ENCODE measurements at regions of chr4 and their contacts with region 1.

Region 1: GRCh38 chr4:102826890-102827673 is at the start of gene UBE2D3:
- DNase-seq: peak; percentile 92 to 98 (median 94)
- ATAC-seq: peak; percentile 39
- H3K4me3 ChIP-seq: peak within 1 kb of the TSS; percentile 89
- H3K4me3 Mint-ChIP-seq: no peak within 1 kb of the TSS
- H3K27ac ChIP-seq: peak within 1 kb of the TSS; percentile 99 to 100
- H3K27ac Mint-ChIP-seq: no peak within 1 kb of the TSS
- H3K4me1 ChIP-seq: peaks cover 14% of the 10 kb centered on the region
- H3K4me1 Mint-ChIP-seq: peaks cover 31% of the 10 kb centered on the region
- H3K27me3 ChIP-seq: no peaks in the 10 kb centered on the region
- H3K27me3 Mint-ChIP-seq: no peaks in the 10 kb centered on the region
- CTCF ChIP-seq: no peak
- total RNA-seq, gene UBE2D3: 659 to 719 TPM

Region 2: DNA sequence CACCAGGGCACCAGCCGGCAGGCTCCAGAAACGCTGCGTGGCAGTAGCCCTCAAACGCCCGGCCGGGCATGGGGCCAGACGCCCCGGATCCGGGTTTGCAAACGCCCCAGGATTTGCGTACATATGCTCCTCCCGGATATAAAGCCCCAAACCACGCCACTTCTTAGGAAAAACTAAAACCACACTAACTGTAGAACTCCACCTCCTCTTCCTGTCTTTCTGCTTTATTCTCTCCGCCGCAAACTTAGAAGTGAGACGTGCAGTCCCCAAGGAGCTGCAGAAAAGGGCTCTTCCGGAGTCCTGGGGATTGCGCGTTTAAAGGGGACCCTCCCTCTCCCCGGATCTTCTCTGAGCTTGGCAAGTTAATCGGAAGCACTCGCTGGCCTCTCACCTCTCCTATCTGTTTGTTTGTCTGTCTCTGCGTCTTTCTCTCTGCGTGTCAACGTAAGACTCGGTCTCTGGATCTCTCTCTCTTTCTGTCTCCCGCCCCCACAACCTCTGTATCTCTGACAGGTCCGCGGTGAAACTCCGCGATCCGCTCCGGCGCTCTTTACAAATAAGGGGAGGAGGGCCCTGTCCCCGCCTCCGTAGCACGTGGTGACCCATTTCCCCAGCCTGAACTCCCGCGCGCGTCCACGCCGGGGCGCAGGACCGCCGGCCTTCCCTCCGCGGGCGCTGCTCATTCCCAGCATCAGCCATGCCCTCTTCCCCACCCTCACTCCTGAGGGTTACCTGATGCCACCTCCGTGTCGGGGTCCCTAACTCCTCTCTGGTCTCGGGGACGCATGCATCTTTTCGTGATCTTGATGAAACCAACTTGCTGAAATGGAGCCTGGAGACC is 481.9 kb before region 1 on chr4 and contains the start of gene SLC39A8:
- CTCF ChIA-PET with region 1: interaction called, 3 read pairs
- POLR2A ChIA-PET with region 1: interaction called, 37 read pairs
- intact Hi-C with region 1: loop called (anchors 5 to 10 kb)
- DNase-seq: peak; percentile 71 to 95 (median 81)
- ATAC-seq: peak; percentile 80
- H3K4me3 ChIP-seq: peak within 1 kb of the TSS; percentile 82
- H3K4me3 Mint-ChIP-seq: peak within 1 kb of the TSS; percentile 87
- H3K27ac ChIP-seq: peak within 1 kb of the TSS; percentile 88 to 93
- H3K27ac Mint-ChIP-seq: peak within 1 kb of the TSS; percentile 88
- H3K4me1 ChIP-seq: peaks cover 25% of the 10 kb centered on the region
- H3K4me1 Mint-ChIP-seq: peaks cover 47% of the 10 kb centered on the region
- H3K27me3 ChIP-seq: no peaks in the 10 kb centered on the region
- H3K27me3 Mint-ChIP-seq: no peaks in the 10 kb centered on the region
- CTCF ChIP-seq: peak; percentile 95
- total RNA-seq, gene SLC39A8: 17.9 to 18.0 TPM

Region 3: DNA sequence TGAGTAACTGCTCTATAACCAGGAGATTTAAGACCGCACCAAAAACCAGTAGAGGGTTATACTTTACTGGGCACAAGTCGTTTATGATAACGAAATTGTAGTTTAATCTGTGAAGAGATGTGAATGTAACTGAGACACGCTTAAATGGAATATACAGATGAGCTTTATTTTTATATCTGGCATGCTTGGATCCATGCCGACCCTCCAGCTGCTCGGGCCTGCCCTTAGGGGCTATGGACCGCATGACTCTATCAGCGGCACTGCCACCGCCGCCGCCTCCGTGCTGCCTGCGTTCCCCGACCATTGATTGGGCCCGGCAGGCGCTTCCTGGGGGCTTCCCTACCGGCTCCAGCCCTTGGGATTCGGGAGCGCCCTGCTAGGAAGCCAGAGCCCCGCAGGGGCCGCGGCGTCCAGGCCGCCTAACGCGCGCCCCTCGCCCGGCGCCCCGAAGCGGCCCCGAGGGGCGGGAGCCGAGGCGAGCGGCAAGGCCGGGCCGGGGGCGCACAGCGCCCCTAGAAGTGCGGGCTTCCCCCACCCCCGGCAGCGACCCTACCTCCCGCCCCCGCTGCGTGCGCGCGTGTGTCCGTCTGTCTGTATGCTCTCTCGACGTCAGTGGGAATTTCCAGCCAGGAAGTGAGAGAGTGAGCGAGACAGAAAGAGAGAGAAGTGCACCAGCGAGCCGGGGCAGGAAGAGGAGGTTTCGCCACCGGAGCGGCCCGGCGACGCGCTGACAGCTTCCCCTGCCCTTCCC is 326.2 kb before region 1 on chr4 and contains the start of gene NFKB1:
- CTCF ChIA-PET with region 1: interaction called, 6 read pairs
- POLR2A ChIA-PET with region 1: interaction called, 44 read pairs
- intact Hi-C with region 1: loop called (anchors 1 to 5 kb)
- DNase-seq: peak; percentile 56 to 97 (median 68)
- ATAC-seq: peak; percentile 65
- H3K4me3 ChIP-seq: peak within 1 kb of the TSS; percentile 96
- H3K4me3 Mint-ChIP-seq: peak within 1 kb of the TSS; percentile 98
- H3K27ac ChIP-seq: peak within 1 kb of the TSS; percentile 99 to 100
- H3K27ac Mint-ChIP-seq: peak within 1 kb of the TSS; percentile 94
- H3K4me1 ChIP-seq: peaks cover 11% of the 10 kb centered on the region
- H3K4me1 Mint-ChIP-seq: peaks cover 42% of the 10 kb centered on the region
- H3K27me3 ChIP-seq: no peaks in the 10 kb centered on the region
- H3K27me3 Mint-ChIP-seq: no peaks in the 10 kb centered on the region
- CTCF ChIP-seq: no peak
- total RNA-seq, gene NFKB1: 134 TPM

Region 4: DNA sequence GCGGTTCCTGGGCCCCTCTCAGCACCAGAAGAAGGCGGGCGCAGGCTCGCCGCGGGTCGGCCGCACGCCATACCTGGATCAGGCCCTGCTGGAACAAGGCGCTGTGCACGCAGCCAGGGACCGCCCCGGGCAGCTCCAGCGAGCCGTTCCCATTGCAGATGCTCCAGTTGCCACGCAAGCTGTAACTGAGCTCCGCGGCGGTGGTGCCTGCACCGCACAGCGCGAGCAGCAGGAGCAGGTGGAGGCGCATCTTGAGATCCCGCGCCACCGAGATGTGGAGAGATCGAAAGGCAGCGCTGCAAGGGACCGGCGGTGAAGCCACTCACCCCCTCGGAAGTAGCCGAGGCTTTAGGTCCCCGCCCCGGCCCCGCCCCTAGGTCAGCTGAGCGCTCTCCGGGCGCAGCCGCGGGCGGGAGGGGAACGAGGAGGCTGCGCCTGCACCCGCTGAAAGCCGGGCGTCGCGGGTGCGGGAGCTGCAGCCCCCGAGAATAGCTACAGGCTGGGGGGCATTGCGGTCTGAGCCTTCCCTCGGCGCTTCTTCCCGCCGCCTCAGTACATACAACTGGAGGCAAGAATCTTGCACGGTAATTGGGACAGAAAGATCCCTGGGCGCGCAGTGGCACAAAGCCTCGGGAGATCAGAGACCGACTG is 66.3 kb before region 1 on chr4 and contains the start of gene MANBA:
- CTCF ChIA-PET with region 1: interaction called, 6 read pairs
- POLR2A ChIA-PET with region 1: interaction called, 109 read pairs
- intact Hi-C with region 1: loop called (anchors 1 to 2 kb)
- DNase-seq: peak; percentile 66 to 92 (median 81)
- ATAC-seq: peak; percentile 83
- H3K4me3 ChIP-seq: peak within 1 kb of the TSS; percentile 84
- H3K4me3 Mint-ChIP-seq: peak within 1 kb of the TSS; percentile 95
- H3K27ac ChIP-seq: peak within 1 kb of the TSS; percentile 51 to 67
- H3K27ac Mint-ChIP-seq: peak within 1 kb of the TSS; percentile 88
- H3K4me1 ChIP-seq: peaks cover 16% of the 10 kb centered on the region
- H3K4me1 Mint-ChIP-seq: peaks cover 48% of the 10 kb centered on the region
- H3K27me3 ChIP-seq: no peaks in the 10 kb centered on the region
- H3K27me3 Mint-ChIP-seq: no peaks in the 10 kb centered on the region
- CTCF ChIP-seq: no peak
- total RNA-seq, gene MANBA: 16.9 to 18.2 TPM

Region 5: GRCh38 chr4:102809190-102809589 is 17.9 kb before region 1 on chr4:
- CTCF ChIA-PET with region 1: interaction called, 3 read pairs
- POLR2A ChIA-PET with region 1: interaction called, 193 read pairs
- intact Hi-C with region 1: loop called (anchors 2 kb)
- DNase-seq: peak in 2 of 14 experiments; percentile 20 to 23
- ATAC-seq: peak; percentile 81
- H3K4me3 ChIP-seq: no peak overlapping the region
- H3K4me3 Mint-ChIP-seq: peak overlapping the region; percentile 28
- H3K27ac ChIP-seq: no peak overlapping the region
- H3K27ac Mint-ChIP-seq: peak overlapping the region; percentile 54
- H3K4me1 ChIP-seq: peaks cover 21% of the 10 kb centered on the region
- H3K4me1 Mint-ChIP-seq: peaks cover 89% of the 10 kb centered on the region
- H3K27me3 ChIP-seq: no peaks in the 10 kb centered on the region
- H3K27me3 Mint-ChIP-seq: no peaks in the 10 kb centered on the region
- CTCF ChIP-seq: no peak

Region 6: GRCh38 chr4:102868781-102869568 is 41.9 kb after region 1 on chr4 and contains the start of gene CISD2:
- CTCF ChIA-PET with region 1: interaction called, 27 read pairs
- POLR2A ChIA-PET with region 1: interaction called, 419 read pairs
- intact Hi-C with region 1: loop called (anchors 1 kb)
- DNase-seq: peak; percentile 79 to 96 (median 86)
- ATAC-seq: peak; percentile 81
- H3K4me3 ChIP-seq: peak within 1 kb of the TSS; percentile 70
- H3K4me3 Mint-ChIP-seq: peak within 1 kb of the TSS; percentile 87
- H3K27ac ChIP-seq: peak within 1 kb of the TSS; percentile 94 to 96
- H3K27ac Mint-ChIP-seq: peak within 1 kb of the TSS; percentile 98
- H3K4me1 ChIP-seq: peaks cover 21% of the 10 kb centered on the region
- H3K4me1 Mint-ChIP-seq: peaks cover 77% of the 10 kb centered on the region
- H3K27me3 ChIP-seq: no peaks in the 10 kb centered on the region
- H3K27me3 Mint-ChIP-seq: no peaks in the 10 kb centered on the region
- CTCF ChIP-seq: no peak
- total RNA-seq, gene CISD2: 12.8 to 13.7 TPM

Region 7: DNA sequence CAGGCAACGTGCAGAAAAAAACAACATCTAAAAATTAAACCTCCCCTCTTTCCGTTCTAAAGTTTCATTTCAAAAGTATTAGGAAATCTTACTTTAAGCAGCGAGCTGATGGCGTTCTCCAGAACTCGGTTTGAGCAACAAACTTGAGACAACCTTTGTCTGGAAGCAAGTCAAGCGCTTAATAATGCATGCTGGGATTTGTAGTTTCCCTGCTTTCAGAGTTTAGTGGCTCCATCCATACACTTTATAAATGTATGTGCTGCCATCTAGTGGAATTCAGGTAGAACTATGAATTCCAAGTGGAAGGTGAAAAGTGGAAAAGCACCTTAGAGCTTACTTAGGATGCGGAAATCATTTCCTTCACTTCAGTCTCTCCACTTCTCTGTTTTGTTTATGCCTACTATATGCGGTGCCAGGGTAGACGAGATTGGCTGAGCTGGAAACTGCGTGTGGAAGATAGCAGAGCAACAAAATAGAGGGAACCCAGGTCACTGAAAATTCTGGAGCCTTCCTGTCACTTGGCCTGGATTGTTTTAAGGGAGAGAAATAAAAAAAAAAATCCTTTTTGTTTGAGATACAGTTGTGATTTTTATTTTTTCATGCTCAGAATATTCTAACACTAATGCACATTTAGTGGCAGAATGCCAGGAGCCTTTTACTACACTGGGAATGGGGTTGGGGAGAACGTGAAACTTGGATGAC is 272.8 kb after region 1 on chr4 and contains the start of gene BDH2:
- CTCF ChIA-PET with region 1: interaction called, 5 read pairs
- POLR2A ChIA-PET with region 1: interaction called, 30 read pairs
- intact Hi-C with region 1: no loop called
- DNase-seq: peak in 10 of 14 experiments; percentile 7 to 92 (median 36)
- ATAC-seq: peak; percentile 99
- H3K4me3 ChIP-seq: peak within 1 kb of the TSS; percentile 52
- H3K4me3 Mint-ChIP-seq: peak within 1 kb of the TSS; percentile 92
- H3K27ac ChIP-seq: no peak within 1 kb of the TSS
- H3K27ac Mint-ChIP-seq: peak within 1 kb of the TSS; percentile 79
- H3K4me1 ChIP-seq: peaks cover 14% of the 10 kb centered on the region
- H3K4me1 Mint-ChIP-seq: peaks cover 33% of the 10 kb centered on the region
- H3K27me3 ChIP-seq: no peaks in the 10 kb centered on the region
- H3K27me3 Mint-ChIP-seq: no peaks in the 10 kb centered on the region
- CTCF ChIP-seq: peak; percentile 82
- total RNA-seq, gene BDH2: 9.9 to 10.3 TPM